ENCODE measurements at regions of chr20 and their contacts with region 1.

Region 1: DNA sequence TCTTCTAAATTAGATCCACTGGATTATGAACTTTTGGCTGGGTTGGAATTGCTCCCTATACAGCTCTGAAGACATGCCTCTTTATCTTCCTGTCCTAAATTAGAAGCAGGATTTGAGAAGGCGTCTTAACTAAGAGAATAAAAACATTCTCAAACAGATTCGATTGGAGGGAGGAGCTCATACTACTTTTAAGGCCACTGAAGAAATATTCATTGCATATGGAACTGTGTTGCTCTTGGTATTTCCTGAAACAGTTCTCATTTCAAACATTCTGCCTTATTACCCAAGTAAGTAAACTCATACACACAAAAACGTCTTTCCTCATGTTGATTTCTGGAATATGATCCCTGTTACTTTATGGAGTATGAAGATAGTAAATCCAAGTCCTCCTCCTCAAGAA is 519.7 kb upstream of the CDH4 start:
- DNase-seq: no peak
- H3K4me3 ChIP-seq: no peak overlapping the region
- H3K27ac ChIP-seq: no peak overlapping the region
- H3K4me1 ChIP-seq: no peaks in the 10 kb centered on the region
- H3K27me3 ChIP-seq: no peaks in the 10 kb centered on the region
- CTCF ChIP-seq: no peak
- EP300 ChIP-seq: no peak
- POLR2A ChIP-seq: no peak

Region 2: GRCh38 chr20:60395991-60396390 is 336.3 kb before region 1 on chr20:
- intact Hi-C with region 1: no loop called
- DNase-seq: no peak
- H3K4me3 ChIP-seq: no peak overlapping the region
- H3K27ac ChIP-seq: no peak overlapping the region
- H3K4me1 ChIP-seq: no peaks in the 10 kb centered on the region
- H3K27me3 ChIP-seq: no peaks in the 10 kb centered on the region
- CTCF ChIP-seq: no peak
- EP300 ChIP-seq: no peak
- POLR2A ChIP-seq: no peak

Region 3: GRCh38 chr20:61719691-61720347 is 987.5 kb after region 1 on chr20:
- intact Hi-C with region 1: loop called (anchors 10 kb)
- DNase-seq: no peak
- H3K4me3 ChIP-seq: no peak overlapping the region
- H3K27ac ChIP-seq: no peak overlapping the region
- H3K4me1 ChIP-seq: no peaks in the 10 kb centered on the region
- H3K27me3 ChIP-seq: peaks cover 0 to 58% (median 0%) of the 10 kb centered on the region in 4 donors
- CTCF ChIP-seq: no peak
- EP300 ChIP-seq: no peak
- POLR2A ChIP-seq: no peak

Measured in esophagus muscularis mucosa (tissue), 4 donors.